HCT116 (cell line): ENCODE measurements at regions of chr2 and their contacts with region 1.

Region 1: DNA sequence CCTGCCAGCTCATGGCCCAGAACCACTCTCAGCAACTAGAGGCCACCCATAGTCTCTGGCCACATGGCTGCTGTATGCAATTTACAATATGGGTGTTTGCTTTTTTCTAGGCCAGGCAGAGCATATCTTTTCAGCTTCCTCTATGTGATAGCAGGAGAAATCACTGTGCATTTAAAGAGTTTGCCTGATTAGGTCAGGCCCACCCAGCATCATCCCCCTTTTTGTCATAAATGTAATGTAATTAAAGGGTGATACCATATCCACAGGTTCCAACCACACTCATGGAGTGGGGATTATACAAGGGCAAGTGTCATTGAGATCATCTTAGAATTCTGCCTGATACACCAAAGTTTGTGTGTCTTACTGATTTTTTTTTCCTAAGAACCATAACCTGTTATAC is 71.7 kb upstream of the TTC21B start:
- DNase-seq: no peak
- ATAC-seq: no peak
- H3K4me3 ChIP-seq: no peak overlapping the region
- H3K27ac ChIP-seq: no peak overlapping the region
- H3K4me1 ChIP-seq: no peaks in the 10 kb centered on the region
- H3K27me3 ChIP-seq: peaks cover 8% of the 10 kb centered on the region; the same call in 1 of the 2 replicates
- CTCF ChIP-seq: no peak
- POLR2A ChIP-seq: no peak
- RAD21 ChIP-seq: no peak

Region 2: GRCh38 chr2:165725421-165725820 is 299.9 kb before region 1 on chr2:
- CTCF ChIA-PET with region 1: no interaction called
- POLR2A ChIA-PET with region 1: no interaction called
- RAD21 ChIA-PET with region 1: no interaction called
- intact Hi-C with region 1: loop called (anchors 10 kb)
- DNase-seq: no peak
- ATAC-seq: no peak
- H3K4me3 ChIP-seq: no peak overlapping the region
- H3K27ac ChIP-seq: no peak overlapping the region
- H3K4me1 ChIP-seq: peaks cover 0 to 9% of the 10 kb centered on the region in 2 experiments; a peak in 2 of 4 replicates
- H3K27me3 ChIP-seq: peaks cover 12% of the 10 kb centered on the region; the same call in 1 of the 2 replicates
- CTCF ChIP-seq: no peak
- POLR2A ChIP-seq: no peak
- RAD21 ChIP-seq: no peak

Region 3: GRCh38 chr2:165766324-165766927 is 258.9 kb before region 1 on chr2:
- CTCF ChIA-PET with region 1: no interaction called
- POLR2A ChIA-PET with region 1: no interaction called
- RAD21 ChIA-PET with region 1: no interaction called
- intact Hi-C with region 1: no loop called
- DNase-seq: no peak
- ATAC-seq: no peak
- H3K4me3 ChIP-seq: no peak overlapping the region
- H3K27ac ChIP-seq: no peak overlapping the region
- H3K4me1 ChIP-seq: peaks cover 0 to 3% of the 10 kb centered on the region in 2 experiments; a peak in 1 of 4 replicates
- H3K27me3 ChIP-seq: no peaks in the 10 kb centered on the region
- CTCF ChIP-seq: no peak
- POLR2A ChIP-seq: no peak
- RAD21 ChIP-seq: no peak